CD14-positive monocyte (primary cell): ENCODE measurements at regions of chr16 and their contacts with region 1.

Region 1: GRCh38 chr16:56041686-56042085 is 149.6 kb upstream of the GNAO1 start:
- DNase-seq: no peak
- H3K4me3 ChIP-seq: no peak overlapping the region
- H3K4me3 Mint-ChIP-seq: no peak overlapping the region
- H3K27ac ChIP-seq: no peak overlapping the region
- H3K27ac Mint-ChIP-seq: no peak overlapping the region
- H3K4me1 ChIP-seq: no peaks in the 10 kb centered on the region
- H3K4me1 Mint-ChIP-seq: no peaks in the 10 kb centered on the region
- H3K27me3 ChIP-seq: peaks cover 0 to 11% of the 10 kb centered on the region in 2 donors
- H3K27me3 Mint-ChIP-seq: peaks cover 3 to 7% (median 5%) of the 10 kb centered on the region in 3 donors
- CTCF ChIP-seq: no peak

Region 2: DNA sequence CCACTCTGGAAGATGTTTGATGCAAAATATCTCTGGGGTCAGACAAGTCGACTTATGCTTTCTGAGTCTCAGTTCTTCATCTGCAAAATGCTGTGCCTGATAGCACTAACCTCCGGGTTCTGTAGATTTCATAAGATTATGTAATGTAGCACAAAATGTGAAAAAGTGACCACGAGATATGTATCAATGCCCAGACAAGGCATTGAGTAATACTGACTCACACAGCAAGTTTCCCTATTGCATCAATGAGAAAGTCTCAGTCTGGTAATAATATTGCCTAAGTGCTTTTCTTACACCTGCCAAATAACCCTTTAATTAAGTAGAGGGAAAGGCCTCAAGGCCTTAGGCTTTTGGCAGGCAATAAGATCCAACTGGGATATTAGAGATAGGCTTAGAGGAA is 604.1 kb before region 1 on chr16:
- intact Hi-C with region 1: loop called in 1 of 2 experiments (anchors 10 kb)
- DNase-seq: peak; percentile 91 to 99 (median 97)
- H3K4me3 ChIP-seq: peak overlapping the region in 1 of 3 experiments; percentile 12
- H3K4me3 Mint-ChIP-seq: peak overlapping the region in 1 of 2 donors; percentile 64
- H3K27ac ChIP-seq: peak overlapping the region; percentile 70 to 92
- H3K27ac Mint-ChIP-seq: peak overlapping the region; percentile 91 to 98 (median 98)
- H3K4me1 ChIP-seq: peaks cover 49 to 50% of the 10 kb centered on the region in 2 donors
- H3K4me1 Mint-ChIP-seq: peaks cover 47% of the 10 kb centered on the region
- H3K27me3 ChIP-seq: no peaks in the 10 kb centered on the region
- H3K27me3 Mint-ChIP-seq: peaks cover 0 to 8% (median 5%) of the 10 kb centered on the region in 3 donors
- CTCF ChIP-seq: no peak

Region 3: DNA sequence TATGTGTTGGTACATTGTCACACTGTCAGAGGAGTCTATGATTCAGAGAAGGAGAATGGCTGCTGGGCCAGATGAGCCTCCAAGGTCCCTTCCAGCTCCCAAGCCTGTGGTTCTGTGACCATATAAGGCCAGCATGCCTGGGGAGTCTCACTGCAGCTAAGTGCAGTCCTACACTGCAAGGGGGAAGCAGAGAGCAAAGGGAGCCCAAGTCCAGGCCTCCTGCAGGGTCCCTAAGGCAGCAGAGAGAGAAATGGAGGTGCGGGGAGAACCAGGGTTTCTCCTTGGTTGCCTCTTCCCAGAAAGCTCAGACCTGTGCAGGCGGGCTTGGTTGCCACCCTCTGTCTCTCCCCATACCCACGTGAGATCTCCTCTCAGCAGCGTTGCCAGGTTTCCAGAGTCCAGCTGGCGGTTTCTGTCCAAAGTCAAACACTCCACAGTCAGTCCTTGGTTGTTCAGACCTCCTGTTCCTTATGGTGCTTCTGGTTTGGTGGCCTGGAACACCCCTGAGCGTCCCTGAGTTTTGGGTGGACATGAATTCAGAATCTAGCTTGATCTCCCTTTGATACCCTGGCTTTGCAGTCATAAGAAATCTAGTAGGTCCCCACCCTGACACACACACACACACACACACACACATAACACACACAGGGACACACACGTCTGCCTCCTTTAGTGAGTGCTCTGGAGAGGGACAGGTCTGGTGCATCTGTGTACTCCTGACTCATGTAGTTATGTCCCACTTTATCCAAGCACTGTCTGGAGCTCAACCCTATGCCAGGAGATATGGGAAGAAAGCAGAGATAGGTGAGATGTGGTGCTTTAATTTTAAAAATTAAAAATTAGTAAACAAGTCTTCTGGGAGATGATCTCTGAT is 228.4 kb after region 1 on chr16:
- intact Hi-C with region 1: no loop called
- DNase-seq: no peak
- H3K4me3 ChIP-seq: no peak overlapping the region
- H3K4me3 Mint-ChIP-seq: no peak overlapping the region
- H3K27ac ChIP-seq: no peak overlapping the region
- H3K27ac Mint-ChIP-seq: no peak overlapping the region
- H3K4me1 ChIP-seq: peaks cover 19 to 34% of the 10 kb centered on the region in 2 donors
- H3K4me1 Mint-ChIP-seq: peaks cover 43% of the 10 kb centered on the region
- H3K27me3 ChIP-seq: no peaks in the 10 kb centered on the region
- H3K27me3 Mint-ChIP-seq: peaks cover 2 to 11% (median 4%) of the 10 kb centered on the region in 3 donors
- CTCF ChIP-seq: no peak

Region 4: DNA sequence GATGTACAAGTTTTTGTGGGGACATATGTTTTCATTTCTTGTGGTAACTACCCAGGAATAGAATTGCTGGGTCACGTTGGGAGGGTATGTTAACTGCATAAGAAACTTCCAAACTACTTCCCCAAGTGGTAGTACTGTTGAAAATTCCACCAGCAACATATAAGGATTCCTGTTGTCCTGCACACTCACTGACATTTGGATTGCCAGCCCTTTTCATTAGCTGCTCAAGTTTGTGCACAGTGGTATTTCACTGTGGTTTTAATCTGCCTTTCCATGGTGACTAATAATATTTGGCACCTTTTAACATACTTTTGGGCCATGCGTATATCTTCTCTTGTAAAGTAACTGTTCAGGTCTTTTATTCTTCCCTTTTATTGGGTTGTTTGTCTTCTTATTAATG is 252.9 kb after region 1 on chr16:
- intact Hi-C with region 1: loop called in 1 of 2 experiments (anchors 10 kb)
- DNase-seq: no peak
- H3K4me3 ChIP-seq: no peak overlapping the region
- H3K4me3 Mint-ChIP-seq: peak overlapping the region in 1 of 2 donors; percentile 4
- H3K27ac ChIP-seq: no peak overlapping the region
- H3K27ac Mint-ChIP-seq: no peak overlapping the region
- H3K4me1 ChIP-seq: peaks cover 34 to 41% of the 10 kb centered on the region in 2 donors
- H3K4me1 Mint-ChIP-seq: peaks cover 40% of the 10 kb centered on the region
- H3K27me3 ChIP-seq: no peaks in the 10 kb centered on the region
- H3K27me3 Mint-ChIP-seq: peaks cover 1 to 4% (median 2%) of the 10 kb centered on the region in 3 donors
- CTCF ChIP-seq: no peak